CD4-positive, alpha-beta memory T cell (primary cell): ENCODE measurements at regions of chr10 and their contacts with region 1.

Region 1: GRCh38 chr10:21740989-21741388 is 207.0 kb downstream of the MLLT10 start:
- DNase-seq: peak; percentile 56 to 75 (median 68)
- H3K4me3 ChIP-seq: no peak overlapping the region
- H3K4me3 Mint-ChIP-seq: peak overlapping the region; percentile 5 to 74 (median 62)
- H3K27ac ChIP-seq: peak overlapping the region; percentile 48
- H3K27ac Mint-ChIP-seq: peak overlapping the region; percentile 84 to 98 (median 95)
- H3K4me1 ChIP-seq: peaks cover 56% of the 10 kb centered on the region
- H3K4me1 Mint-ChIP-seq: peaks cover 44 to 60% (median 49%) of the 10 kb centered on the region in 4 donors
- H3K27me3 ChIP-seq: no peaks in the 10 kb centered on the region
- H3K27me3 Mint-ChIP-seq: no peaks in the 10 kb centered on the region

Region 2: DNA sequence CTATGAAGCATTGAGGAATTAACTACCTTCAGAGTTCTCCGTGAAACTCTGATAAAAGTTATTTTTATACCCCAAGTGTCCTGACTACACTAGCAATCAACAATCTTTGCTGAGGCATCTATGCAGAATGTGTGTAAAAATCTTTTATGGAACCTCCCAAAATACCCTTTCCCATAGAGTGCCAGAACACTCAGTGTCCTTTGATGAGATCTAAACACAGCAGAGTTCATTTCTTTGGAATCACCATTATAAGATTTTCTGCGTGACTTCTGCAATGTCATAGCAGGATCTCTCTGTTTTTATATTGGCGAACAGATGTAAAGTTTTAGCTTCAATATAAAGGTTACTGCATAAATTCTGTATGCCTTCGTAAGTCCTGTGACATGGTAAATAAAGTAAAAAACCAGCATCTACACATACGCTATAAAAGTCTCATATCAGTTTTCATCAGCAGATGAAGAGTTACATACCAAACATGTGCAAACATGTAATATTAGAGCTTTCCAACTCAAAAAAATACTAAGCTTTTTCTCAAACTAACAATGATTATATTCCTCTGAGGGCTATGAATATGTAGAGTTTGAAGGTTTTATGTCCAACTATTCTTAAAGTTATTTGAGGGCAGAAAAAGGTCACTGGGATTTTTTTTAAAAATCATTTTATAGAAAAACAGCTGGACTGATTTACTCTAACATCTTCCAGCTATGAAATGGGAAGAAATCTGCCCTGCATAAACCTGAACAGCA is 282.7 kb before region 1 on chr10:
- CTCF ChIA-PET with region 1: no interaction called
- POLR2A ChIA-PET with region 1: no interaction called
- intact Hi-C with region 1: no loop called
- DNase-seq: no peak
- H3K4me3 ChIP-seq: no peak overlapping the region
- H3K4me3 Mint-ChIP-seq: no peak overlapping the region
- H3K27ac ChIP-seq: no peak overlapping the region
- H3K27ac Mint-ChIP-seq: no peak overlapping the region
- H3K4me1 ChIP-seq: no peaks in the 10 kb centered on the region
- H3K4me1 Mint-ChIP-seq: no peaks in the 10 kb centered on the region
- H3K27me3 ChIP-seq: no peaks in the 10 kb centered on the region
- H3K27me3 Mint-ChIP-seq: peaks cover 4 to 9% of the 10 kb centered on the region in 2 donors

Region 3: DNA sequence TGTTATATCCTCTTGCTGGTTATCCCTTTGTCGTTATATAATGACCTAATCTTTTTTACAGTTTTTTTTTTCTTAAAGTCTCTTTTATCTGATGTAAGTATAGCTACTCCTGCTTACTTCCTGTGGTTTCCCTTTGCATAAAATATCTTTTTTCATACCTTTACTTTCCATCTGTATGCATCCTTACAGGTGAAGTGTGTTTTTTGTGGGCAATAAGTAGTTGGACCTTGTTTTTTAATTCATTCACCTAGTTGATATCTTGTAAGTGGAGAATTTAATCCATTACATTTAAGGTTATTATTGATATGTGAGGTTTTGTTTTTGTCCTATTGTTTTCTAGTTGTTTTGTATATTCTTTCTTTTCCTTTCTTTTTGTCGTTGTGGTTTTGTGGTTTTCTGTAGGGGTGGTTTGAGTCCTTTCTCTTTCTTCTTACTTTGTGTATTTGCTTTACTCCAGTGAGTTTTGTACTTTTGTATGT is 38.3 kb before region 1 on chr10:
- CTCF ChIA-PET with region 1: no interaction called
- POLR2A ChIA-PET with region 1: no interaction called
- intact Hi-C with region 1: loop called (anchors 5 kb)
- DNase-seq: peak in 4 of 5 donors; percentile 58 to 73 (median 65)
- H3K4me3 ChIP-seq: no peak overlapping the region
- H3K4me3 Mint-ChIP-seq: peak overlapping the region; percentile 45 to 69 (median 64)
- H3K27ac ChIP-seq: no peak overlapping the region
- H3K27ac Mint-ChIP-seq: peak overlapping the region; percentile 19 to 72 (median 53)
- H3K4me1 ChIP-seq: peaks cover 24% of the 10 kb centered on the region
- H3K4me1 Mint-ChIP-seq: peaks cover 27 to 51% (median 37%) of the 10 kb centered on the region in 4 donors
- H3K27me3 ChIP-seq: no peaks in the 10 kb centered on the region
- H3K27me3 Mint-ChIP-seq: no peaks in the 10 kb centered on the region

Region 4: GRCh38 chr10:21724695-21725367 is 16.2 kb before region 1 on chr10:
- CTCF ChIA-PET with region 1: interaction called, 3 read pairs
- POLR2A ChIA-PET with region 1: no interaction called
- intact Hi-C with region 1: loop called (anchors 2 kb)
- DNase-seq: peak; percentile 40 to 55 (median 48)
- H3K4me3 ChIP-seq: no peak overlapping the region
- H3K4me3 Mint-ChIP-seq: peak overlapping the region in 2 of 8 donors; percentile 12 to 19
- H3K27ac ChIP-seq: no peak overlapping the region
- H3K27ac Mint-ChIP-seq: peak overlapping the region in 3 of 7 donors; percentile 10 to 43 (median 25)
- H3K4me1 ChIP-seq: peaks cover 26% of the 10 kb centered on the region
- H3K4me1 Mint-ChIP-seq: peaks cover 25 to 43% (median 34%) of the 10 kb centered on the region in 4 donors
- H3K27me3 ChIP-seq: no peaks in the 10 kb centered on the region
- H3K27me3 Mint-ChIP-seq: no peaks in the 10 kb centered on the region